ENCODE measurements at regions of chr11 and their contacts with region 1.

Region 1: DNA sequence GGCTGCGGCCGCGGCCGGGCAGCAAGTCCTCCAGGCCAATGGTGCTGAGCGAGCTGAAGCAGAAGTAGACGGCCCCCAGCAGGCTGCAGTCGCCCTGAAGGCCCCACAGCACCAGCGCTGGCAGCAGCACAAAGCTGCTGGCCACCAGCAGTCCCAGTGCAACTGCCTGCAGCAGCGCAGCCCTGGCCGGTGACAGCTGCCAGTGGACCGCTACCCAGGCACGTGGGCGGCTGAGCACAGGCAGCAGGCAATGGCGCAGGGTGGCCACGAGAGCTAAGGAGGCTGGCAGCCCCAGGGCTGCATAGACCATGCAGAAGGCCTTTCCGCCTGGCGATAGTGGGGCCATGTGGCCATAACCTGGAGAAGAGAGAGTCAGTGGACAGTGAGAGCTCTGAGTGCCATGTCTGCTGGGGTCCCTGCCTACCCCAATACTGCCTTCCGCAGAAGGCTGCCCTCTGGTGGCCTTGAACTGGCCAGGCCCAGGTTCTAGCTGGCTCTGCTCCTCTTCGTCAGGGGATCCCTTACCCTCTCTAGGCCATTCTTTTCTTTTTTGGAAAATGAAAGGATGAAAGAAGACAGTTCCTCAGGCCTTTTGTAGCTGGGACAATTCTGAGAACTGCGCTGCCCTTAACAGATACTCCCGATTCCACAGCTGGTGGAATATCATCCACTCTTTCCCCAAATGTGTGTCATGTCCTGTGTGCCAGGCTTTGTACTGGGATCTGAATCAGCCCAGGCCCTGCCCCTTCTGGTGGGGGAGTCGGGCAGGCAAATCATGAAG is 1.9 kb downstream of the KCNK7 start:
- DNase-seq: no peak
- ATAC-seq: peak; percentile 66
- H3K4me3 ChIP-seq: no peak overlapping the region
- H3K27ac ChIP-seq: no peak overlapping the region
- H3K4me1 ChIP-seq: peaks cover 8% of the 10 kb centered on the region
- H3K27me3 ChIP-seq: no peaks in the 10 kb centered on the region
- CTCF ChIP-seq: peak; percentile 82
- EP300 ChIP-seq: no peak
- POLR2A ChIP-seq: no peak
- RAD21 ChIP-seq: peak; percentile 47; the same call in 1 of the 2 replicates

Region 2: GRCh38 chr11:65477149-65477965 is 116.4 kb before region 1 on chr11:
- CTCF ChIA-PET with region 1: no interaction called
- POLR2A ChIA-PET with region 1: no interaction called
- in situ Hi-C with region 1: no loop called
- intact Hi-C with region 1: no loop called
- DNase-seq: peak; percentile 88
- ATAC-seq: peak; percentile 85
- H3K4me3 ChIP-seq: peak overlapping the region; percentile 75 to 90 (median 82)
- H3K27ac ChIP-seq: peak overlapping the region; percentile 95
- H3K4me1 ChIP-seq: peaks cover 62% of the 10 kb centered on the region
- H3K27me3 ChIP-seq: no peaks in the 10 kb centered on the region; a peak in 1 of 5 replicates
- CTCF ChIP-seq: no peak
- EP300 ChIP-seq: peak; percentile 59; a peak in 3 of 4 replicates
- POLR2A ChIP-seq: peak; percentile 72 to 86
- RAD21 ChIP-seq: peak; percentile 49; the same call in 1 of the 2 replicates

Region 3: DNA sequence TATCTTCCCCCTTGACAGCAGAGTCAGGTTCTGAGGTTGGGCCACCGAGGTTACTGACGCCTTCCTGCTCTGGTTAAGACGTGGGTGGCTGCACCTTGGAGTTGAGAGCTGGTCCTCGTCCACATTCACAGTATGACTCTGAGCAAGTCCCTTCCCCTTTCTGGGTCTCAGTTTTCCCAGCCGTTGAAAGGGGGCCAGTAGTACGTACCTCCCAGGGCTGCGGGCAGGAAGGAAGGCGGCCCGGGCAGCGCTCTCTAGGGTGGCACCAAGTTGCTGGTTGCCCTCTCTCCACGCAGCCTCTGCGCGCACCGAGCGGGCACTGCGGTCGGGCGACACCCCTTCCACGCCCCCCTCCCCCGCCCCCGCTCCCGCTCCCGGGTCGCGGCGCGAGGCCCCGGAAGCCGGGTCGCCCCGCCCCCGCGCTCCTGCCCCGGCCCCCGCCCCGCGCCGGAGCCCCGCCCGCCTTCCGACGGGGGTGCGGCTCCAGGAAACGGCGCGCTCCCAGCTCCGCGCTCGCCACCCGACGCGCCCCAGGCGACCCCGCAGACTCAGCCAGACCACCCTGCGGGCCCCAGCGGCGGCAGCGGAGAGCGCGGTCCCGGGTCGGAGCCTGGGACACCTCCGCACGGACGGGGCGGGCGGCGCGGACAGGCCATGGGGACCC is 18.0 kb before region 1 on chr11 and contains the start of gene EHBP1L1:
- CTCF ChIA-PET with region 1: interaction called, 16 read pairs
- POLR2A ChIA-PET with region 1: interaction called, 11 read pairs
- in situ Hi-C with region 1: no loop called
- intact Hi-C with region 1: no loop called
- DNase-seq: no peak
- ATAC-seq: peak; percentile 9
- H3K4me3 ChIP-seq: peak within 1 kb of the TSS; percentile 69 to 77 (median 73)
- H3K27ac ChIP-seq: no peak within 1 kb of the TSS
- H3K4me1 ChIP-seq: peaks cover 54% of the 10 kb centered on the region
- H3K27me3 ChIP-seq: no peaks in the 10 kb centered on the region; a peak in 1 of 5 replicates
- CTCF ChIP-seq: no peak
- EP300 ChIP-seq: no peak
- POLR2A ChIP-seq: no peak
- RAD21 ChIP-seq: no peak
- total RNA-seq, gene EHBP1L1: 5.4 and 10.6 TPM in 2 replicates

Region 4: DNA sequence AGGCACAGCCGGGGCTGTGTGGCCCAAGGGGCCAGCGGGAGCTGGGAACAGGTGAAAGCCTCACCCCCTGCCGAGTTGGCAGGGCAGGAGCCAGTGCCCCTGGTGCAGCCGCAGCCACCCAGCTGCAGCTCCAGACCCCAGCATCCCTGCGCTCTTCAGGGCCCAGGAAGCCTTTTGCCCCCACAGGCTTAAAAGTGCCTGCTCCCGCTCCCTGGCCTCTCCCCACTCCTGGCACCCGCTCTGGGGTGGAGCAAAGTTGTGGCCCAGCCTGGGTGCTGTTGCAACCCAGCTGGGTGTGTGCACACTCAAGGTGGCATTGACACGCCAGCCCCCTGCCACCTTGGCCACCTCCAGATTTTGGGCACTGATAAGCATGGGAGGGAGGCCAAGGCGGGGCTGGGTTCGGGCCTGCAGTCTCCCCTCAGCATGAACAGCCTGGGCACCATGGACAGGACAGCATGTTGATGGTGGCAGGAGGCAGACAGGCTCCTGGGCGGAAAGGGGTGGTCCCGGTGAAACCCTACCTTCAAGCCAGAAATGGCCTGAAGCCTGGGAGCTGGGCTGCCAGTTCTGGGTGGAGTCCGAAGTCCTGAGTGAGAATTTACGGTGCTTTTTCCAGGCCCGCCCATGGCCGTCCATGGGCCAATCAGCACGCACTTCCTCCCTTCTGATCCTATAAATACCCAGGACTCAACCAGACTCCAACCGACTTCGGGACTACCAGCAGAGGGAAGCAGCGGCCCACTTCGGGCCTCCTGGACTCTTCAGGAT is 150.4 kb after region 1 on chr11:
- CTCF ChIA-PET with region 1: no interaction called
- POLR2A ChIA-PET with region 1: no interaction called
- in situ Hi-C with region 1: no loop called
- intact Hi-C with region 1: no loop called
- DNase-seq: peak; percentile 82
- ATAC-seq: peak; percentile 98
- H3K4me3 ChIP-seq: peak overlapping the region in 1 of 3 experiments; percentile 56; a peak in 3 of 6 replicates
- H3K27ac ChIP-seq: no peak overlapping the region
- H3K4me1 ChIP-seq: peaks cover 8% of the 10 kb centered on the region
- H3K27me3 ChIP-seq: no peaks in the 10 kb centered on the region
- CTCF ChIP-seq: peak; percentile 91
- EP300 ChIP-seq: no peak
- POLR2A ChIP-seq: peak; percentile 28 to 60; a peak in 3 of 4 replicates
- RAD21 ChIP-seq: peak; percentile 85

Measured in HepG2 (cell line).